ENCODE measurements at regions of chr7 and their contacts with region 1.

Region 1: GRCh38 chr7:34354899-34355298 is 303.1 kb upstream of the NPSR1 start:
- DNase-seq: no peak
- ATAC-seq: no peak
- H3K4me3 ChIP-seq: no peak overlapping the region
- H3K27ac ChIP-seq: no peak overlapping the region
- H3K4me1 ChIP-seq: no peaks in the 10 kb centered on the region
- H3K27me3 ChIP-seq: no peaks in the 10 kb centered on the region
- CTCF ChIP-seq: no peak

Region 2: DNA sequence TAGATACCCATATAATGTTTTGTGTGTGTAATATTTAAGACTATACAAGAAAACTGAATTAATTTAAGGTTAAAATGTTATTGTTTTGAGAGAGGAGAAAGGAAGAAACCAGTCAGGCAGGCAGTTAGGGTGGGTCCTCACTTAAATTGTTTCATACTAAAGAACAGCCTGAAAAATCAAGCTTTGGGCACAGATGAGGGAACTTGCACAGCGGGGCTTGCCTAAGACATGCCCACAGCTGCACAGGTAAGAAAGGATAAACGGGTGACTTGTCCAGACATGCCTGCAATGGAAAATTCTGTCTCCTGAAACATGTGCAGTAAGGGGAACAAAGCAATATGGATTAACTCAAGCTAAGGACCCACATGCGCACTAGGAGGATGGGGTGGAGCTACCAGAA is 1067.2 kb before region 1 on chr7:
- intact Hi-C with region 1: no loop called
- DNase-seq: no peak
- ATAC-seq: no peak
- H3K4me3 ChIP-seq: no peak overlapping the region
- H3K27ac ChIP-seq: no peak overlapping the region
- H3K4me1 ChIP-seq: no peaks in the 10 kb centered on the region
- H3K27me3 ChIP-seq: no peaks in the 10 kb centered on the region
- CTCF ChIP-seq: no peak

Region 3: GRCh38 chr7:34184466-34184865 is 170.4 kb before region 1 on chr7:
- intact Hi-C with region 1: no loop called
- DNase-seq: no peak
- ATAC-seq: no peak
- H3K4me3 ChIP-seq: no peak overlapping the region
- H3K27ac ChIP-seq: no peak overlapping the region
- H3K4me1 ChIP-seq: no peaks in the 10 kb centered on the region
- H3K27me3 ChIP-seq: no peaks in the 10 kb centered on the region
- CTCF ChIP-seq: no peak

Region 4: GRCh38 chr7:34260279-34260678 is 94.6 kb before region 1 on chr7:
- intact Hi-C with region 1: no loop called
- DNase-seq: no peak
- ATAC-seq: peak; percentile 42 to 89 (median 78)
- H3K4me3 ChIP-seq: no peak overlapping the region
- H3K27ac ChIP-seq: no peak overlapping the region
- H3K4me1 ChIP-seq: no peaks in the 10 kb centered on the region
- H3K27me3 ChIP-seq: no peaks in the 10 kb centered on the region
- CTCF ChIP-seq: no peak

Region 5: DNA sequence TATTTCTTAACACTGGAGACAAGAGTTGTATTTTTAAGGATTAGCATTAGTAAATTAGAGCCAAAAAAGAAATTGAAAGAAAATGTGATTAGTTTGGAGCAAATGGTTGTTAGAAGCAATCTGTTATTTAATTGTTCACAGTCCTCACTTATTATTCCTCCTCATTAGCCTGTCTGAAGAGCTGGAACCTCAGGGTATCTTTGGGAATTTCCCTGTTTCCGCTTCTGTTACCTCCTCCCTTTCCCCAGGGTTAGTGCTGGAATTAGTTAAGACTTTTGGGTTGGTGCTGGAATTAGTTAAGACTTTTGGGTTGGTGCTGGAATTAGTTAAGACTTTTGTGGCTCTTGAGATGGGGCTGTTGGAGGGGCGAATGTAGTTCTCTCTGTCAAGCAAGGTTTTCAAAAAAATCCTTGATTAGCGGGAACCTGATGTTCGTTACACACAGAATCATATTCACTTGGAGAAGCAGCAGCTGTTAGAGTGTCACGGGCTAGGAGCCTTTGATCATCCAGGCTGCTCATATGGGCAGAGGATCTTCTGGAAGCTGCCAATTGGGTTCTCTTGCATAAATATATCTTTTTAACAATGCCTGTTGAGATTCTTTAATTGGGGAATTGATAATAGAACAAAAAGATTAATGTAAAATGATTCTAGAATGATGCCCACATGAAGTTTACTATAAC is 52.1 kb after region 1 on chr7:
- intact Hi-C with region 1: loop called in 1 of 2 experiments (anchors 5 kb)
- DNase-seq: no peak
- ATAC-seq: no peak
- H3K4me3 ChIP-seq: no peak overlapping the region
- H3K27ac ChIP-seq: no peak overlapping the region
- H3K4me1 ChIP-seq: no peaks in the 10 kb centered on the region
- H3K27me3 ChIP-seq: no peaks in the 10 kb centered on the region
- CTCF ChIP-seq: no peak

Measured in psoas muscle (tissue), 8 donors.